ENCODE measurements at regions of chr10 and their contacts with region 1.

Region 1: DNA sequence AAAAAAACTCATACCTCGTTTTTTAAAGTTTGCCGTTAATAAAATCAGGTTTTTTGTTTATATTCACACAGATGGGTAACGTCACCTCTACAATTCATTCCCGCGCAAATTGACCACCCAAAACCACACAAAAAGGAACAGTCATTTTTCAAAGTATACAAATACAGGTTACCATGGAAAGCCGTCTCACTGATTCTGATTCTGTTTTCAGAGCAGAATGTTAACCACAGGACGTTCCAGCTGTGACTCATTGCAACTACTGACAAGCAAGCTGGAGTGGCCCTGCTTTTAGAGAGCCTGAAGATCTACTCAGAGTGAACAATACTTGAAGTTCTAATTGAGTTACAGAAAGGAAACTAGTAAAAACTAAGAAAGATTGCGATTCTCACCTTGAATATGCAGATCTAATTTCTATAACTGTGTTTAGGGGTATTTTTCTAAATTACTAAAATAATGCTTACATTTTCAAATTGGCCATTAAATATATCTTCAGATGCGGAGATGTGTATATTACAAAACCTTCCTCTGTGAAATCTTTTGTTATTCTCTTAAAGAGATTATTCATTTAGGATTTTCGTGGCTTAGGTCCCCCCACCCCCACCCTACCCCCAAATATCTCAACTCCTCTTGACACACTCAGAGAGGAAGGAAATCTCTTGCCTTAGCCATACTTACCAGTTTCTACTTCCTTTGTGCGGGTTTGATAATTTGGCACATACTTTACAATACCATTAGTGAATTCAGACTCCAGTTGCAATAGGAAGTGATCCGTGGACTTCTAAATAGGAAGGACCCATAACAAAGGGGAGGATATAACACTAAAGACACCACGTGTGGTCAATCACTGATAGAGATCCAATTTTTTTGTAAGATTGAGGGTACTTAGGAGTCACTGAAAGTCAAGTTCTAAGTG is 106.0 kb downstream of the CUBN start:
- DNase-seq: peak; percentile 57 to 93
- ATAC-seq: peak; percentile 63 to 83 (median 79)
- H3K4me3 ChIP-seq: no peak overlapping the region
- H3K4me3 Mint-ChIP-seq: peak overlapping the region; percentile 76
- H3K27ac ChIP-seq: peak overlapping the region; percentile 98
- H3K27ac Mint-ChIP-seq: peak overlapping the region; percentile 97
- H3K4me1 ChIP-seq: peaks cover 40% of the 10 kb centered on the region
- H3K4me1 Mint-ChIP-seq: peaks cover 47 to 57% of the 10 kb centered on the region in 2 donors
- H3K27me3 ChIP-seq: no peaks in the 10 kb centered on the region
- H3K27me3 Mint-ChIP-seq: no peaks in the 10 kb centered on the region
- CTCF ChIP-seq: no peak

Region 2: GRCh38 chr10:16867556-16867955 is 156.1 kb before region 1 on chr10:
- intact Hi-C with region 1: no loop called
- DNase-seq: no peak
- ATAC-seq: no peak
- H3K4me3 ChIP-seq: no peak overlapping the region
- H3K4me3 Mint-ChIP-seq: no peak overlapping the region
- H3K27ac ChIP-seq: no peak overlapping the region
- H3K27ac Mint-ChIP-seq: no peak overlapping the region
- H3K4me1 ChIP-seq: no peaks in the 10 kb centered on the region
- H3K4me1 Mint-ChIP-seq: no peaks in the 10 kb centered on the region
- H3K27me3 ChIP-seq: no peaks in the 10 kb centered on the region
- H3K27me3 Mint-ChIP-seq: peaks cover 13 to 20% of the 10 kb centered on the region in 2 donors
- CTCF ChIP-seq: no peak

Region 3: GRCh38 chr10:17003151-17003550 is 20.5 kb before region 1 on chr10:
- intact Hi-C with region 1: loop called (anchors 1 kb)
- DNase-seq: peak; percentile 51 to 88
- ATAC-seq: peak; percentile 92 to 98 (median 95)
- H3K4me3 ChIP-seq: no peak overlapping the region
- H3K4me3 Mint-ChIP-seq: peak overlapping the region; percentile 17
- H3K27ac ChIP-seq: no peak overlapping the region
- H3K27ac Mint-ChIP-seq: peak overlapping the region; percentile 61 to 84
- H3K4me1 ChIP-seq: peaks cover 11% of the 10 kb centered on the region
- H3K4me1 Mint-ChIP-seq: peaks cover 23 to 25% of the 10 kb centered on the region in 2 donors
- H3K27me3 ChIP-seq: peaks cover 7% of the 10 kb centered on the region
- H3K27me3 Mint-ChIP-seq: peaks cover 59 to 81% of the 10 kb centered on the region in 2 donors
- CTCF ChIP-seq: no peak

Region 4: DNA sequence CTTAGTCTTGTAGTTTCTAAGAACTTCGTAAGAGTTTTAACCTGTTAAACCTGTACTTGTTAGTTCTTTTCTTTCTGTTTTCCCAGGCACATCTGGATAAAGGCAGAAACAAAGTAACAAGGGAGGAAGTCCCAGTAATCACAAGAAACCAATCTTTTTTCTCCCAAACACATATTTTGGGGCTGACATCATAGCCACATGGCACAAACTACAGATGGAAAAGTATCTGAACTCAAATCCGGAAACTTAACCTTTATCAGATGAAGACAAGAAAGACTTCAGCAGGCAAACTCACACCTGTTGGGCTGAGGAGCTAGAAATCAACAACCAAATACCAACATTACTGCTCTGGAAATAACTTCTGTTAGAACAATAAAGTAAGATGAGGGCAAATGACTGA is 38.9 kb after region 1 on chr10:
- intact Hi-C with region 1: no loop called
- DNase-seq: no peak
- ATAC-seq: no peak
- H3K4me3 ChIP-seq: no peak overlapping the region
- H3K4me3 Mint-ChIP-seq: no peak overlapping the region
- H3K27ac ChIP-seq: no peak overlapping the region
- H3K27ac Mint-ChIP-seq: no peak overlapping the region
- H3K4me1 ChIP-seq: no peaks in the 10 kb centered on the region
- H3K4me1 Mint-ChIP-seq: peaks cover 8% of the 10 kb centered on the region in 2 donors
- H3K27me3 ChIP-seq: no peaks in the 10 kb centered on the region
- H3K27me3 Mint-ChIP-seq: no peaks in the 10 kb centered on the region
- CTCF ChIP-seq: no peak

Region 5: GRCh38 chr10:17101257-17101909 is 77.7 kb after region 1 on chr10:
- intact Hi-C with region 1: no loop called
- DNase-seq: no peak
- ATAC-seq: no peak
- H3K4me3 ChIP-seq: no peak overlapping the region
- H3K4me3 Mint-ChIP-seq: no peak overlapping the region
- H3K27ac ChIP-seq: no peak overlapping the region
- H3K27ac Mint-ChIP-seq: no peak overlapping the region
- H3K4me1 ChIP-seq: no peaks in the 10 kb centered on the region
- H3K4me1 Mint-ChIP-seq: no peaks in the 10 kb centered on the region
- H3K27me3 ChIP-seq: no peaks in the 10 kb centered on the region
- H3K27me3 Mint-ChIP-seq: no peaks in the 10 kb centered on the region
- CTCF ChIP-seq: no peak

Region 6: GRCh38 chr10:17216217-17216900 is 192.7 kb after region 1 on chr10:
- intact Hi-C with region 1: loop called (anchors 2 kb)
- DNase-seq: peak in 1 of 2 donors; percentile 65
- ATAC-seq: peak; percentile 92 to 98 (median 96)
- H3K4me3 ChIP-seq: no peak overlapping the region
- H3K4me3 Mint-ChIP-seq: peak overlapping the region; percentile 40
- H3K27ac ChIP-seq: peak overlapping the region; percentile 73
- H3K27ac Mint-ChIP-seq: peak overlapping the region; percentile 91 to 97
- H3K4me1 ChIP-seq: peaks cover 13% of the 10 kb centered on the region
- H3K4me1 Mint-ChIP-seq: peaks cover 13 to 19% of the 10 kb centered on the region in 2 donors
- H3K27me3 ChIP-seq: no peaks in the 10 kb centered on the region
- H3K27me3 Mint-ChIP-seq: no peaks in the 10 kb centered on the region
- CTCF ChIP-seq: no peak

Region 7: GRCh38 chr10:17454161-17455014 is 430.7 kb after region 1 on chr10 and contains the start of gene ST8SIA6:
- intact Hi-C with region 1: loop called (anchors 10 kb)
- DNase-seq: peak; percentile 68 to 73
- ATAC-seq: peak; percentile 70 to 76 (median 75)
- H3K4me3 ChIP-seq: peak within 1 kb of the TSS; percentile 70
- H3K4me3 Mint-ChIP-seq: peak within 1 kb of the TSS; percentile 93
- H3K27ac ChIP-seq: peak within 1 kb of the TSS; percentile 75
- H3K27ac Mint-ChIP-seq: peak within 1 kb of the TSS; percentile 87 to 94
- H3K4me1 ChIP-seq: peaks cover 19% of the 10 kb centered on the region
- H3K4me1 Mint-ChIP-seq: peaks cover 35 to 38% of the 10 kb centered on the region in 2 donors
- H3K27me3 ChIP-seq: no peaks in the 10 kb centered on the region
- H3K27me3 Mint-ChIP-seq: no peaks in the 10 kb centered on the region
- CTCF ChIP-seq: peak; percentile 11
- total RNA-seq, gene ST8SIA6: 12.2 to 19.7 (median 12.5) TPM

Region 8: DNA sequence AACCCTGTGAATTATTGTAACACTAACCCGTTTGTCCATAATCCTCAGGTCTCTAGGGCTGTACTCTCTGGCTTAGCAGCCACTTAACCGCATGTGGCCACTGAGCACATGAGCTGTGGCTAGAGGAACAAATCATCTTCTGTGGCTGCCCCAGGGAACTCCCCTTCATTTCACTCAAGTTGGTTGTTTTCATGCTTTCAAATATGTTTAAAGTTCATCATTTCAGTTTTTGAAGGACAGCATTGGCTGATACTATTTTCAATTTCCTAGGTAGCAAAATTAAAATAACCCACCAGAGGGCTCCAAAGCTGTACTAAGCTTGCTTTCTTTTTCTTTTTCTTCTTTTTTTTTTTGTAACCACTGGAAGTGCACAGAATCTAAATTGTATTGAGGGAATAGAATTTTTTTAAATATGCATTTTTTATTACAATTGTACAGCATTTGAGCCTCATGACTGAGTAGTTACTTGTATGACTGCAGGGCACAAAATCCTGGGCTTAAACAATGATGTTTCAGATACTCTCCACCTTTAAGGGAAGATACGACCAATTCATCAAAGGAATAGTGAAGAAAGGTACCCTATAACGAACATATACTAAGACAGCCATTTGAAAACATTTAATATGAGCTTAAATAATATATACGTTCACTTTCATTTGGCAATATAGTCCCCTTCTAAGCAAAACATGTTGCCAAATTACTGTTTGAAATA is 824.1 kb after region 1 on chr10:
- intact Hi-C with region 1: loop called (anchors 10 kb)
- DNase-seq: peak in 1 of 2 donors; percentile 16
- ATAC-seq: peak in 1 of 3 donors; percentile 36
- H3K4me3 ChIP-seq: no peak overlapping the region
- H3K4me3 Mint-ChIP-seq: no peak overlapping the region
- H3K27ac ChIP-seq: no peak overlapping the region
- H3K27ac Mint-ChIP-seq: no peak overlapping the region
- H3K4me1 ChIP-seq: no peaks in the 10 kb centered on the region
- H3K4me1 Mint-ChIP-seq: peaks cover 0 to 12% of the 10 kb centered on the region in 2 donors
- H3K27me3 ChIP-seq: no peaks in the 10 kb centered on the region
- H3K27me3 Mint-ChIP-seq: peaks cover 0 to 20% of the 10 kb centered on the region in 2 donors
- CTCF ChIP-seq: peak; percentile 38

Region 9: DNA sequence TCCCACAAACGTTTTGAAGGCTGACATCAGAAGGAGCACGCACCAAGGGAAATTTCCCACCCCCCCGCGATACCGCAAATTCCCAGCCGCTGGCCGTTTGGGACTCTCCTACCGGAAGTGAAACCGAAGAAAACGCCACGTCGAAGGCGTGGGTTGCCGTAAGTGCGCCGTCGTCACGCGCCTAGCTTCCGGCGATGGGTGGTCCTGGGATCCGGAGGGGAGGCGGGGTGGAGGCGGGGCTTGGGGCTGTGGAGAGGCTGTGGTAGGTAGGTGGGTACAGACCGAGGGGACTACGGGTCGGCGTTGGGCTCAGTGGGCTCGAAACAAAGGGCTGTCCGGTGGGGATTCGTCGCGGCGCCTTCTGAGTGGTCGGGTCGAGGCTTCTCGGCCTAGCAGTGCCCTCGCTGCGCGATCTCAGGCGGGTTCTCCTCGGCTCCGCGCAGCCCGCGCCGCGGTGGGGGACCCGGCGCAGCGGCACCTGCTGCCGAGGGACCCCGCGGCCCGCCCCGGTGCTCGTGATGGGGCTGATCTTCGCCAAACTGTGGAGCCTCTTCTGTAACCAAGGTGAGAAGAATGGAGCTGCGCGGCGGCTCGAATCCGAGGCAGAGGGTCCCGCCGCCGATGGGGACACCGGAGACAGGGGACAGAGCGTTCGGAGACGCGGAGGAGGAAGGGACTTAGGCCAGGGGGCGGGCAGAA is 1635.6 kb after region 1 on chr10 and contains the start of gene ARL5B:
- intact Hi-C with region 1: loop called (anchors 10 kb)
- DNase-seq: peak; percentile 91 to 98
- ATAC-seq: peak; percentile 93 to 99 (median 94)
- H3K4me3 ChIP-seq: peak within 1 kb of the TSS; percentile 78
- H3K4me3 Mint-ChIP-seq: peak within 1 kb of the TSS; percentile 99
- H3K27ac ChIP-seq: peak within 1 kb of the TSS; percentile 98
- H3K27ac Mint-ChIP-seq: peak within 1 kb of the TSS; percentile 94 to 100
- H3K4me1 ChIP-seq: peaks cover 15% of the 10 kb centered on the region
- H3K4me1 Mint-ChIP-seq: peaks cover 29 to 42% of the 10 kb centered on the region in 2 donors
- H3K27me3 ChIP-seq: no peaks in the 10 kb centered on the region
- H3K27me3 Mint-ChIP-seq: no peaks in the 10 kb centered on the region
- CTCF ChIP-seq: no peak
- total RNA-seq, gene ARL5B: 19.1 to 25.9 (median 20.8) TPM